AG04450 (cell line): ENCODE measurements at regions of chr7 and their contacts with region 1.

Region 1: GRCh38 chr7:15720849-15721471 is 34.5 kb upstream of the MEOX2 start:
- DNase-seq: peak; percentile 11
- H3K4me3 ChIP-seq: no peak overlapping the region
- H3K27ac ChIP-seq: no peak overlapping the region
- H3K27me3 ChIP-seq: no peaks in the 10 kb centered on the region
- CTCF ChIP-seq: peak; percentile 77

Region 2: DNA sequence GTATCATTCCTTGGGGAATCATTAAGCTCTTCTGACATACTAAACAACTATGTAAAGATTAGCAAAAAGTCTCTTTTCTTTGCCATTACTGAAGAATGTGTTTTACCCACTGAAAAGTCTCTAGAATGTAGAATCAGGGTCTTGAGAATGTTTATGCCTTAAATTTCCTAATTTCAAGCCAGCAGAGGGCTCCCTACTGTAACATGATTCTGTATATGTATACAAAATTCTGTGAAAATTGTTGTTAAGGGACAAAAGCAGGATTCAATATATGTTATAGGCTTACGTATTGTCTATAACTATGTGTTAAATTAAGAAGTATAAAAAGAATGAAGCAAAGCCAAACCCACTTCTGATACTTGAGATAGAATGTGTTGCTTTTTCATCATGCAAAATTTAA is 521.5 kb before region 1 on chr7:
- CTCF ChIA-PET with region 1: interaction called, 10 read pairs
- POLR2A ChIA-PET with region 1: no interaction called
- DNase-seq: no peak
- H3K4me3 ChIP-seq: no peak overlapping the region
- H3K27ac ChIP-seq: no peak overlapping the region
- H3K27me3 ChIP-seq: no peaks in the 10 kb centered on the region
- CTCF ChIP-seq: peak; percentile 47

Region 3: DNA sequence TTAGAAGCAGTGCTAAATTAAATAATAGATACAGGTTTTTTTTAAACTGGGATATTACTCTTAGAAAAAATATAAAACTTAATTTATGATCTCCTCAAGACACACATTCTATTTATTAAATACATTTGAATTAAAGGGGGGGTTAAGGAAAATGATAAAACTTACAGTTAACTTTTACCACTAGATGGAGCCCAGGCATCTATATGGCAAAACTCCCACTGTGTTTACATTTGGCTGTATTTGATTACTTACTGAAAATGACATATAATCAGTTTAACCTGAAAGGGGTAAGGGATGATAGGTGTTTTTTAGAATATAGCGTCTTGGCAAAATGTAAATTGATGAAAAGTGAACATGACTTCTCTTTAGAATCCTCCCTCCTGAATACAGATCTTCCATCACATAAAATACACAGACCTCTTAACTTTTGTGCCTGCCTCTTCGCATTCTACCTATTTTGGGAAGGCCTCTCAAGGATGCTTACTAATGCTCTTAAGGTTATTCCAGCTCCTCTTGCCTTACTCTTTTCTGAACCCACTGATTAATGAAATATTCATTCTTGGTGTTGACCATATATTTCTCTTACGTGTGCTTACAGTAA is 394.8 kb before region 1 on chr7:
- CTCF ChIA-PET with region 1: interaction called, 35 read pairs
- POLR2A ChIA-PET with region 1: no interaction called
- DNase-seq: peak; percentile 3
- H3K4me3 ChIP-seq: no peak overlapping the region
- H3K27ac ChIP-seq: no peak overlapping the region
- H3K27me3 ChIP-seq: no peaks in the 10 kb centered on the region
- CTCF ChIP-seq: peak; percentile 70

Region 4: DNA sequence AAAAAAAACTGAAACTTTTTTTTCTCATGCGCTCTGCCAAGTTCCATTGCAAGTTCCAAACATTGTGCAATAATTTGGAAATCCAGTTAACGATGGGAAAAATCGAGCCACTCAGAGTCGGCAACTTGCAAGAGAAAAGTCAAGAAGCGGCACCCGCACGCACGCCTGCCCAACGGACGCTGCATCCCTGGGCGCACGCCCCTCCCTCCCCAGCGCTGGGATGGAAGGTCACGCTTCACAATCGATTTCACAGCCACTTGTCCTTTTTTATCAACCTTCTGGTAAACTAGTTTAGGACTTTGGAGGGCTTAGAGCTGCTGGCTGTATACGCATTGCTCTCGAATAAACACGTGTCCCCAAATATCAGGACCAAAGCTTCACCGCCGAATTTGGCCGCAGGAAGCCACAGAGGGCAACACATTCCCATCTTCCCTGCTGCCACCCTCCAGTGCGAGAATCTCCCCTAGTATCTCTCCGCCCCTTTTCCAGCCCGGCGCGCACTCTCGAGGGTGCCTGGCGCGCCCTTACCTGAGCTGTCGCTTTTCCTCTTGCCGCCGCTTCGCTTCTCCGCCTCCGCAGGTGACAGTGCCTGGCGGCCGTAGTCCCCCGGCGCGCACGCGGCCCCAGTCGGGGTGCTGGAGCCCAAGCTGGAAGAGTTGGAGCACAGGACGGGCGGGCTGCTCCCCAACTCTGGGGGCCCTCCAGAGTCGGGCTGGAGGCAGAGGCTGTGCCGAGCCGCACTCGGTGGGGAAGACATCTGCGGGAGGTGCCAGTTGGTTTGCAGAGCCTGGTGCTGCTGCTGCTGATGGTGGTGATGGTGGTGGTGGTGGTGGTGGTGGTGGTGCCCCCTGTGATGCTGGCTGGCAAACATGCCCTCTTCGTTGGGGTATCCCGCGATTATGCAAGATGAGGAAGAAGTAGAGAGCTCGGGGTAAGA is 35.3 kb before region 1 on chr7:
- CTCF ChIA-PET with region 1: interaction called, 12 read pairs
- POLR2A ChIA-PET with region 1: no interaction called
- DNase-seq: peak; percentile 23
- H3K4me3 ChIP-seq: peak overlapping the region; percentile 43
- H3K27ac ChIP-seq: no peak overlapping the region
- H3K27me3 ChIP-seq: peaks cover 36% of the 10 kb centered on the region
- CTCF ChIP-seq: no peak

Region 5: GRCh38 chr7:15709978-15710377 is 11.0 kb before region 1 on chr7:
- CTCF ChIA-PET with region 1: interaction called, 27 read pairs
- POLR2A ChIA-PET with region 1: no interaction called
- DNase-seq: no peak
- H3K4me3 ChIP-seq: no peak overlapping the region
- H3K27ac ChIP-seq: no peak overlapping the region
- H3K27me3 ChIP-seq: no peaks in the 10 kb centered on the region
- CTCF ChIP-seq: no peak

Region 6: DNA sequence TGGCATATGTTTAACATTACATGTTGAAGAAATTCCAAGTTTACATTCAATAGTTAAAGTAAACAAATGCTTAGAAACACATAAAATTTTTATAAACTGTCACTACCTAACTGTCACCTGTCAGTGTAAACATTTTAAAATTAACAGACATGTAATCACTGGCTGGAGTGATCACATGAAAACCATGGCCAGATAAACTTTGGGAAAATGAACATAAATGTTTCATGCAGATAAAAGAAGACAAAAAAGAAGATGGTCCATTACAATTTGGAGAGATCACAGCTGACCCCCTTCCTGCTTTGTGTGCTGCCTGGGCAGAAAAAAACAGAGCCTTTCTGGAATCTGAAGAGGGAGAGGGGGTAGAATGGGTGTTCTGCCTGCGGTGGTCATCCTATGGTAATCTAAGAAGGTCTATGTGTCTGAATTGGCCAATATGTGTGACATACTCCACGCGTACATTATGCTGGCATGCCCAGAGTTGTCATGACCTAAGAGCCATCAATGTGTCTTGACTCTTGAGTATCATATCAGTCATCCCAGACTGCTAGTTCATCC is 23.0 kb after region 1 on chr7:
- CTCF ChIA-PET with region 1: interaction called, 20 read pairs
- POLR2A ChIA-PET with region 1: no interaction called
- DNase-seq: no peak
- H3K4me3 ChIP-seq: no peak overlapping the region
- H3K27ac ChIP-seq: no peak overlapping the region
- H3K27me3 ChIP-seq: no peaks in the 10 kb centered on the region
- CTCF ChIP-seq: no peak

Region 7: GRCh38 chr7:16071246-16071857 is 350.4 kb after region 1 on chr7:
- CTCF ChIA-PET with region 1: interaction called, 14 read pairs
- POLR2A ChIA-PET with region 1: no interaction called
- DNase-seq: peak; percentile 41
- H3K4me3 ChIP-seq: no peak overlapping the region
- H3K27ac ChIP-seq: no peak overlapping the region
- H3K27me3 ChIP-seq: no peaks in the 10 kb centered on the region
- CTCF ChIP-seq: peak; percentile 76